Heart left ventricle (tissue), 16 donors: ENCODE measurements at regions of chr17 and their contacts with region 1.

Region 1: GRCh38 chr17:60525685-60526514 is at the start of gene APPBP2:
- DNase-seq: peak; percentile 88 to 92 (median 91)
- ATAC-seq: peak; percentile 97 to 99 (median 98)
- H3K4me3 ChIP-seq: peak within 1 kb of the TSS; percentile 54 to 96 (median 84)
- H3K27ac ChIP-seq: peak within 1 kb of the TSS; percentile 93 to 100 (median 99)
- H3K4me1 ChIP-seq: peaks cover 3 to 46% (median 29%) of the 10 kb centered on the region in 12 donors
- H3K27me3 ChIP-seq: no peaks in the 10 kb centered on the region
- CTCF ChIP-seq: no peak
- POLR2A ChIP-seq: peak in 1 of 2 donors; percentile 89
- total RNA-seq, gene APPBP2: 9.9 to 28.7 (median 20.0) TPM

Region 2: DNA sequence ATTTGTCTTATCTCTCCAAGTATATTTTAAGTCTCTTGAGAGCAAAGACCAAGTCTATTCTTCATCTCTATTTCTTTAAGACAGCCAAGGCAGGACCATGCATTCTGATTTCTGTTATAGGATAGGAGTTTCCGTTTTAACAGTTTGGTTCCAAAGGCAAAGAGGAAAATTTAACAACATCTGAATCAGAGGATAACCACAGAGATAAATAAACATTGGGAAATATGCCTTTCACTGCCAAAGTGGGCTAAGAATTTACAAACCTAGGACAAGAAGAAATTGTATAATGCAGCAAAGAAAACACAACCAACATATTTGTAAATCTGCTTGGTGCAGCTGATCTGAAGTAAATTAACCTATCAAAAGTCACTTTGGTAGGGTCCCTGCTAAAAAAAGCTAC is 171.7 kb before region 1 on chr17:
- intact Hi-C with region 1: no loop called
- DNase-seq: no peak
- ATAC-seq: peak in 1 of 4 donors; percentile 20
- H3K4me3 ChIP-seq: no peak overlapping the region
- H3K27ac ChIP-seq: no peak overlapping the region
- H3K4me1 ChIP-seq: peaks cover 0 to 41% (median 6%) of the 10 kb centered on the region in 12 donors
- H3K27me3 ChIP-seq: no peaks in the 10 kb centered on the region
- CTCF ChIP-seq: no peak
- POLR2A ChIP-seq: no peak

Region 3: GRCh38 chr17:60571551-60571950 is 45.7 kb after region 1 on chr17:
- intact Hi-C with region 1: loop called in 5 of 10 experiments (anchors 2 to 5 kb)
- DNase-seq: no peak
- ATAC-seq: no peak
- H3K4me3 ChIP-seq: no peak overlapping the region
- H3K27ac ChIP-seq: peak overlapping the region; percentile 51 to 82 (median 72)
- H3K4me1 ChIP-seq: peaks cover 0 to 55% (median 19%) of the 10 kb centered on the region in 12 donors
- H3K27me3 ChIP-seq: no peaks in the 10 kb centered on the region
- CTCF ChIP-seq: no peak
- POLR2A ChIP-seq: no peak

Region 4: DNA sequence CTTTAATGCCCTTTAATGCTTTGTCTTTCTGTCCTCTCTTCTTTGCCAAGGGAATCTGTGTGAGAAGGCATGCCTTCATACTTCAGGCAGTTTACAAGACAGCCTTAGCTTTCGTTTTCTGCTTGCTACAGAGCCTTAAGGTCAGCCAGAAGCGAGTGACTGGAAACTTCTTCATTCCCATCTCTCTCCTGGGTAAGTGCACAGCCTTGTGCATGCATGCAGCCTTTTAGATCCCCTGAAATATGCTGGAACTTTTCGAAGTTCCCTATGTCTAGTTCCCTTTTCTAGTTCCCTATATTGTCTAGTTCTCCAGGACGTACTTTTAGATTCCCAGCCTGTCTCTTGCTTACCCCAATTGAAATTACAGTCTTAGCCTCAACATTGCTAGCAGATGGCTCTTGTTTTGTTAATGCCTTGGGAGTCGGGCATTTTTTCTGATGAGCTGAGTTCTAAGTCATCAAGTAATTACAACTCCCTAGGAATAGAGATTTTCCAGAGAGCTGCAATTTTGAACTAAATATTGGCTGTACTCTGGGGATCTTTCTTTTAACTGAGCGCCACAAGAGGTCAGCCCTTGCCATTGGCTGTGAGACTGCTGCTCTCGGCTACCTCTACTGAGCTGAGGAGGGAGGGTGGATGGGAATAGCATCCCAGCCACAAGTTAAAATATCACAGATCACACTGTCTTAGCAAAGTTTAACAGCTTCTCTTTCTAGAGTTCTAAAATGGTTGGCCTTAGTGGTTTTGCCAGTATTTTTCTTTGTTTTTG is 51.4 kb after region 1 on chr17:
- intact Hi-C with region 1: loop called in 3 of 10 experiments (anchors 5 kb)
- DNase-seq: peak in 3 of 5 donors; percentile 32 to 49 (median 37)
- ATAC-seq: peak; percentile 71 to 81 (median 78)
- H3K4me3 ChIP-seq: peak overlapping the region in 10 of 12 donors; percentile 23 to 53 (median 42)
- H3K27ac ChIP-seq: peak overlapping the region in 11 of 12 donors; percentile 23 to 89 (median 67)
- H3K4me1 ChIP-seq: peaks cover 0 to 58% (median 10%) of the 10 kb centered on the region in 12 donors
- H3K27me3 ChIP-seq: no peaks in the 10 kb centered on the region
- CTCF ChIP-seq: peak; percentile 12 to 61 (median 43)
- POLR2A ChIP-seq: no peak

Region 5: GRCh38 chr17:60743799-60744198 is 217.9 kb after region 1 on chr17:
- intact Hi-C with region 1: no loop called
- DNase-seq: no peak
- ATAC-seq: no peak
- H3K4me3 ChIP-seq: peak overlapping the region in 2 of 12 donors; percentile 8 to 16
- H3K27ac ChIP-seq: no peak overlapping the region
- H3K4me1 ChIP-seq: peaks cover 0 to 7% (median 0%) of the 10 kb centered on the region in 12 donors
- H3K27me3 ChIP-seq: no peaks in the 10 kb centered on the region
- CTCF ChIP-seq: no peak
- POLR2A ChIP-seq: no peak